ENCODE measurements at regions of chr20 and their contacts with region 1.

Region 1: DNA sequence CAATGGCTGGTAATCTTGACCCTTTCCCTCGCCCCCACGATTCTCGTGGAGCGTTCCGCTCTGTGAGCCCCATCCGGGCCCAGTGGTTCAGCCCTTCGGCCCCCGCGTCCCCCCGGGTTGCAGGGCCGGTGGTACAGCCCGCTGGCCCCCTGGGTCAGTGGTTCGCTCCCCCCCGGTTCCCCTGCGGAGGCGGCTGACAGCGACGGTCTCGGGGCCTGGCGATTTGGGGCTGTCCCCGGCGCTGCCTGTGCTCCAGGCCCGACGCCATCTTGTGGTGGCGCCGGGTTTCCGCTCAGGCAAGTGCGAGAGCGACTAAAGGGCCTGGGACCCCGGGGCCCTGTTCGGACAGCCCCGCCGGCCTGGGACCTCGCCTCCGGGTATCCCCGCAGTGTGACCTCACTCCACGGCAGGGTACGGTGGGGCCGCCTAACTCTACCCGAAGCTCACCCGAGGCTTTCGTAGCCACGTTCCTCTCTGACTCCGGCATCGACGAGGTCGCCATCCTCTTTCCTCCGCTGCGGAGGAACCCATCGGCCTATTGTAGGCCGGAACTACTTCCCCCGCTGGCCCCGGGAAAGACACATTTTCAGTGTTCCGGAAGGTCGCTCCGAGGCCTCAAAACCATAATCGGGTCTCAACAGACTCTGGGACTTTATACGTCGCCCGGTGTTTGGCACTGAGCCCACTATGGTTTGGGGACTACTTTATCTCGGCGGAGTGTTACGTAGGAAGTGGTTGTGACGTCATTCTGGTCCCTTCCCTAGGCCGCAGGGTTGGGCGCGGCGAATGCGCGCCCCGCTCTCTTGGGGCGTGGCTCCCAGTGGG is at the start of gene ZNF335:
- DNase-seq: peak; percentile 92
- H3K4me3 Mint-ChIP-seq: peak within 1 kb of the TSS; percentile 71
- H3K27ac Mint-ChIP-seq: peak within 1 kb of the TSS; percentile 100
- H3K4me1 Mint-ChIP-seq: peaks cover 25% of the 10 kb centered on the region
- H3K27me3 Mint-ChIP-seq: no peaks in the 10 kb centered on the region
- CTCF ChIP-seq: no peak
- total RNA-seq, gene ZNF335: 24.2 and 26.9 TPM in 2 replicates

Region 2: GRCh38 chr20:45564760-45565276 is 407.1 kb before region 1 on chr20:
- CTCF ChIA-PET with region 1: no interaction called
- POLR2A ChIA-PET with region 1: no interaction called
- intact Hi-C with region 1: no loop called
- DNase-seq: no peak
- H3K4me3 Mint-ChIP-seq: no peak overlapping the region
- H3K27ac Mint-ChIP-seq: no peak overlapping the region
- H3K4me1 Mint-ChIP-seq: no peaks in the 10 kb centered on the region
- H3K27me3 Mint-ChIP-seq: peaks cover 61% of the 10 kb centered on the region
- CTCF ChIP-seq: no peak

Region 3: DNA sequence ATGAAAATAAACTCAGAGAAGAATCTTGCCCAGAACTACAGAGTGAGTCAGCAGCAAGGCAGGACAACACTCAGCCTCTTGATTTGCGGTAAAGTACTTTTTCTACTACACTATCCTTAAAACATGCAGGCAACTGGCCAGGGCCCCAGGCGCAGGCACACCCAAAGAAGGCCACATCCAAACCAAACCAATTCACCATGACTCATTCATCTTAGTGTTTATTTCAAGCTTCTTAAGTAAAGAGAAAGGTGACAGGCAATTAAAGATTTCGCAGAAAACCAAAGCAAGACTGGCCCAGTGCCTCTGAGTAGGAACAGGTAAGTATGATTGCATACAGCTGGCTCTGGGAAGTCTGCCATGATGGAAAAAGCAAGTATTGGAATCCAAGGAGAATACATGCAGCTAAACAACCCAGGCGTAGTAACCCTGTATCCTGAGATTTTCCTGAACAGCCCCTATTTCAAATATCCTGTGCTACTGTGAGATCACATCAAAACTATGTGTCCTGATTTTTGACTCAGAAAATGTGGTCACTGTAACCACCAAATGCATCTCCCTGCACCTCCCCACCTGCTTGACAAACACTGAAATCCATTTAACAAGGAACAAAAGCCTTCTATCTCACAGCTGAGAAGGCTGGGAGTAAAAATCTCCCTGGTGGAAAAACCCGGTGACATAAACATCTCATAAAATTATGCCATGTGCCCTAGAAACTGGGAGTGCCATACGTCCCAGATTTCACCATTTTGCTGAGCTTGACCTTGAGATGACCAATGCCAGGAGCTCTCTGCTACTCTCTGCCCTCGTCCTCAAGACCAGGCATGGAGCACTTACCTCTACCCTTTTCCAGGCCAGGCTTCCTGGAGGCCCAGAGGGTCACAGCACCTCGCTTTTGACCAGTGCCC is 192.6 kb before region 1 on chr20:
- CTCF ChIA-PET with region 1: interaction called, 15 read pairs
- POLR2A ChIA-PET with region 1: interaction called, 8 read pairs
- intact Hi-C with region 1: no loop called
- DNase-seq: peak; percentile 98
- H3K4me3 Mint-ChIP-seq: no peak overlapping the region
- H3K27ac Mint-ChIP-seq: peak overlapping the region; percentile 88
- H3K4me1 Mint-ChIP-seq: peaks cover 58% of the 10 kb centered on the region
- H3K27me3 Mint-ChIP-seq: peaks cover 3% of the 10 kb centered on the region
- CTCF ChIP-seq: no peak

Region 4: GRCh38 chr20:45880988-45881788 is 90.7 kb before region 1 on chr20 and contains the start of gene ZSWIM1:
- CTCF ChIA-PET with region 1: interaction called, 12 read pairs
- POLR2A ChIA-PET with region 1: interaction called, 7 read pairs
- intact Hi-C with region 1: no loop called
- DNase-seq: peak; percentile 99
- H3K4me3 Mint-ChIP-seq: peak within 1 kb of the TSS; percentile 97
- H3K27ac Mint-ChIP-seq: peak within 1 kb of the TSS; percentile 97
- H3K4me1 Mint-ChIP-seq: peaks cover 21% of the 10 kb centered on the region
- H3K27me3 Mint-ChIP-seq: no peaks in the 10 kb centered on the region
- CTCF ChIP-seq: no peak
- total RNA-seq, gene ZSWIM1: 7.6 and 10.3 TPM in 2 replicates

Region 5: GRCh38 chr20:45934586-45935415 is 37.1 kb before region 1 on chr20 and contains the start of gene PCIF1:
- CTCF ChIA-PET with region 1: interaction called, 42 read pairs
- POLR2A ChIA-PET with region 1: interaction called, 123 read pairs
- intact Hi-C with region 1: no loop called
- DNase-seq: peak; percentile 97
- H3K4me3 Mint-ChIP-seq: peak within 1 kb of the TSS; percentile 94
- H3K27ac Mint-ChIP-seq: peak within 1 kb of the TSS; percentile 92
- H3K4me1 Mint-ChIP-seq: no peaks in the 10 kb centered on the region
- H3K27me3 Mint-ChIP-seq: no peaks in the 10 kb centered on the region
- CTCF ChIP-seq: no peak
- total RNA-seq, gene PCIF1: 14.3 and 20.5 TPM in 2 replicates

Region 6: GRCh38 chr20:45987108-45987780 is 15.4 kb after region 1 on chr20:
- CTCF ChIA-PET with region 1: interaction called, 200 read pairs
- POLR2A ChIA-PET with region 1: interaction called, 81 read pairs
- intact Hi-C with region 1: no loop called
- DNase-seq: peak; percentile 73
- H3K4me3 Mint-ChIP-seq: no peak overlapping the region
- H3K27ac Mint-ChIP-seq: no peak overlapping the region
- H3K4me1 Mint-ChIP-seq: no peaks in the 10 kb centered on the region
- H3K27me3 Mint-ChIP-seq: no peaks in the 10 kb centered on the region
- CTCF ChIP-seq: peak; percentile 88

Region 7: DNA sequence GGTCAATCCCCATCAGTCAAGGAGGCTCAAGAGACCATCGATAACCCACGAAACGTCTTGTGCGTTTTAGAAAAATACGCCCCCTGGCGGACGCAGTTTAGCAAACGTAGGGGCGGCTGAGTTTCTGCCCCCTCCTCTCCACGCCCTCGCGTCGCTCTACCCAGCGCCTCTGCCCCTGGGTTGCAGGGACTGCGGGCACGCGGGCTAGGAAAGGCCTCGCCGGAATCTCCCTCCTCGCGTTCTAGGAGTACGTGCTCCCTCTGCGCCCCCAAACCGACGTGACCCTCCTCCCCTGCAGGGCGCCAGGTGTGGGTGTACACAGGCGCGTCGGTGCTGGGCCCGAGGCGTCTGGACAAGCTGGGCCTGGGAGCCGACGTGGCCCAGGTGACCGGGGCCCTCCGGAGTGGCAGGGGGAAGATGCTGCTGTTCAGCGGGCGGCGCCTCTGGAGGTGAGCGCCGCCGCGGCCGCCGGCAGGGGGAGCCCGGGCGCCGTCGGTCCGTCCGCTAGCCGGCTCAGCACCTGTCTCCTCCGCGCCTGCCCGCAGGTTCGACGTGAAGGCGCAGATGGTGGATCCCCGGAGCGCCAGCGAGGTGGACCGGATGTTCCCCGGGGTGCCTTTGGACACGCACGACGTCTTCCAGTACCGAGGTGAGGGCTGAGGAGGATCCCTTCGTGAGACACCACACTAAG is 42.1 kb after region 1 on chr20:
- CTCF ChIA-PET with region 1: interaction called, 37 read pairs
- POLR2A ChIA-PET with region 1: interaction called, 8 read pairs
- intact Hi-C with region 1: no loop called
- DNase-seq: peak; percentile 52
- H3K4me3 Mint-ChIP-seq: no peak overlapping the region
- H3K27ac Mint-ChIP-seq: no peak overlapping the region
- H3K4me1 Mint-ChIP-seq: no peaks in the 10 kb centered on the region
- H3K27me3 Mint-ChIP-seq: peaks cover 31% of the 10 kb centered on the region
- CTCF ChIP-seq: peak; percentile 74

Region 8: GRCh38 chr20:46057856-46058598 is 86.1 kb after region 1 on chr20:
- CTCF ChIA-PET with region 1: no interaction called
- POLR2A ChIA-PET with region 1: no interaction called
- intact Hi-C with region 1: no loop called
- DNase-seq: no peak
- H3K4me3 Mint-ChIP-seq: no peak overlapping the region
- H3K27ac Mint-ChIP-seq: no peak overlapping the region
- H3K4me1 Mint-ChIP-seq: no peaks in the 10 kb centered on the region
- H3K27me3 Mint-ChIP-seq: peaks cover 12% of the 10 kb centered on the region
- CTCF ChIP-seq: no peak